Activated naive CD8-positive, alpha-beta T cell treated with anti-CD3 and anti-CD28 coated beads, Interleukin-2, amount 10 ng/mL, durations not matched to agents 7 days and 5 days (primary cell): ENCODE measurements at regions of chr2 and their contacts with region 1.

Region 1: DNA sequence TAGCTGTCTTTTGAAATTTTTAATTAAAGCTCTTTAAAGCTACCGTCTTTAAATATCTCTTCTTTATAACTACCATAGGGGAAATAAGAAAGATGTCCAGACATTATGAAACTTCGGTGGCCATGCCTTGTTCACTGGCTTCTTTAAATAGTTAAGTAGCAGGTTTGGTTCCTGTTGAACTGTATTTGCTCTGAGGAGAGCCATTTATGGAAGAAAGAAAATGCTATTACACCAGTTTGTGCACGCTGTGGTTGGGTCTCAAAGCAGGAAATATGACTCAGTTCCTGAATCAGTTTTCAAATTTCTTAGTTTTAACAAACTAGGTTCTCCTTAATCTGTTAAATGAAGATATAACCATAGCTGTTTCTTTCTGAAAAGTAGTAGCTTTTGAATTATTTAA is 12.2 kb downstream of the ARPC2 start:
- DNase-seq: no peak
- ATAC-seq: peak; percentile 84
- H3K4me3 Mint-ChIP-seq: peak overlapping the region; percentile 74
- H3K27ac Mint-ChIP-seq: peak overlapping the region; percentile 92
- H3K4me1 Mint-ChIP-seq: peaks cover 62% of the 10 kb centered on the region
- H3K27me3 Mint-ChIP-seq: no peaks in the 10 kb centered on the region

Region 2: GRCh38 chr2:218216674-218217359 is 12.4 kb before region 1 on chr2 and contains the start of gene ARPC2:
- POLR2A ChIA-PET with region 1: interaction called, 91 read pairs
- DNase-seq: peak; percentile 98
- ATAC-seq: peak; percentile 64
- H3K4me3 Mint-ChIP-seq: peak within 1 kb of the TSS; percentile 88
- H3K27ac Mint-ChIP-seq: peak within 1 kb of the TSS; percentile 91
- H3K4me1 Mint-ChIP-seq: peaks cover 31% of the 10 kb centered on the region
- H3K27me3 Mint-ChIP-seq: no peaks in the 10 kb centered on the region
- total RNA-seq, gene ARPC2: 707 to 735 TPM

Region 3: DNA sequence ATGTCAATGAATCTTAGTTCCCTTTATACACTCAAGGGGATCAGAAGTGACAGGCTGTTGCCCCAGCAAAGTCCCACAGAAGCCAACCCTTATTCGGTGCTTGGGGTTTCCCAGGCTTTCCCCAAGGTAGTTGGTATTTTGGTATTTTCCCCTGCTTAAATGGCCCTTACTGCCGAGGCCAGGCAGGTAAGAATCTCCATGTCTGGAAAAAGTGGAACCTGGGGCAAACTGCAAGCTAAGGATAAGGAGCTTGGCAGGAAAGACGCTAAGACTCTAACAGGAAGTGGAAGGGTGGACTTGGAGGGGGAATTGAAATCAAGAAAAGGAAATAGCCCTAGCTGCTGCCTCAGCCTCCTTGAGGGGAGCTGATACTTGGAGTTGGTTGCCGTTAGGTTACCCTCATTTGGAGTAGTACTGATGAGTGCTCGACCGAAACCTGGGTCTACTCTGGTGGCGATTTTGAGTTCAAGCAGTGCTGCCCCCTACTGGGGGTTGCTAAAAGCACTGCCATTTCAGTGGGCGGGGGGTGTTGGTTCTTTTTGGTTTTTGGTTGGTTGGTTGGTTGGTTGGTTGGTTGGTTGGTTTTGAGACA is 28.2 kb after region 1 on chr2:
- POLR2A ChIA-PET with region 1: interaction called, 12 read pairs
- DNase-seq: peak; percentile 65
- ATAC-seq: peak; percentile 76
- H3K4me3 Mint-ChIP-seq: peak overlapping the region; percentile 35
- H3K27ac Mint-ChIP-seq: peak overlapping the region; percentile 83
- H3K4me1 Mint-ChIP-seq: peaks cover 11% of the 10 kb centered on the region
- H3K27me3 Mint-ChIP-seq: no peaks in the 10 kb centered on the region